Activated CD8-positive, alpha-beta T cell treated with anti-CD3 and anti-CD28 coated beads for 36 hours (primary cell): ENCODE measurements at regions of chr2 and their contacts with region 1.

Region 1: DNA sequence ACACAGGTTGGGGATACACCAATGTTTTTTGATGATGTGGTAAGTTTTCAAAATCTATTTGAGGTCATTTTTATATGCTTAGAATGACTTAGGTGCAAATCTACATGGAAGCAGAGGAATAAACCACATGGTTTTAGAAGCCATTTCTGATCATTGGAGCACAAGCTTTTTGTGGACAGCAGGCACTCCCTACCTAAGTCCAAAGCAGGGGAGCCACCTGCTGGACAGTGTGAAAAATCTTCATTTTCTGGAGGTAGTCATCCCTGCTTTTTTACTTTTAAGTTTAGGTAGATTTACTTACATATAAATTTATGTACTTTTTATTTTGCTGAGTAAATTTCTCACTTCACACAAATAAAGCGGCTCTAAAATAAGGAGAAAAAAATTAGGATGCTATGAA is 323.2 kb downstream of the PLCL1 start:
- DNase-seq: peak; percentile 42
- ATAC-seq: peak; percentile 60
- H3K4me3 Mint-ChIP-seq: no peak overlapping the region
- H3K27ac Mint-ChIP-seq: no peak overlapping the region
- H3K4me1 Mint-ChIP-seq: no peaks in the 10 kb centered on the region
- H3K27me3 Mint-ChIP-seq: no peaks in the 10 kb centered on the region
- CTCF ChIP-seq: peak; percentile 68

Region 2: GRCh38 chr2:197799068-197799467 is 328.6 kb before region 1 on chr2:
- CTCF ChIA-PET with region 1: interaction called, 27 read pairs
- POLR2A ChIA-PET with region 1: no interaction called
- intact Hi-C with region 1: loop called (anchors 1 kb)
- DNase-seq: no peak
- ATAC-seq: no peak
- H3K4me3 Mint-ChIP-seq: no peak overlapping the region
- H3K27ac Mint-ChIP-seq: no peak overlapping the region
- H3K4me1 Mint-ChIP-seq: peaks cover 13% of the 10 kb centered on the region
- H3K27me3 Mint-ChIP-seq: peaks cover 19% of the 10 kb centered on the region
- CTCF ChIP-seq: no peak

Region 3: GRCh38 chr2:197804049-197804757 is 323.4 kb before region 1 on chr2 and contains the start of gene PLCL1:
- CTCF ChIA-PET with region 1: interaction called, 27 read pairs
- POLR2A ChIA-PET with region 1: no interaction called
- intact Hi-C with region 1: loop called (anchors 1 kb)
- DNase-seq: peak; percentile 93
- ATAC-seq: peak; percentile 99
- H3K4me3 Mint-ChIP-seq: peak within 1 kb of the TSS; percentile 85
- H3K27ac Mint-ChIP-seq: peak within 1 kb of the TSS; percentile 71
- H3K4me1 Mint-ChIP-seq: peaks cover 40% of the 10 kb centered on the region
- H3K27me3 Mint-ChIP-seq: peaks cover 8% of the 10 kb centered on the region
- CTCF ChIP-seq: no peak
- total RNA-seq, gene PLCL1: 0.68 to 0.69 TPM

Region 4: DNA sequence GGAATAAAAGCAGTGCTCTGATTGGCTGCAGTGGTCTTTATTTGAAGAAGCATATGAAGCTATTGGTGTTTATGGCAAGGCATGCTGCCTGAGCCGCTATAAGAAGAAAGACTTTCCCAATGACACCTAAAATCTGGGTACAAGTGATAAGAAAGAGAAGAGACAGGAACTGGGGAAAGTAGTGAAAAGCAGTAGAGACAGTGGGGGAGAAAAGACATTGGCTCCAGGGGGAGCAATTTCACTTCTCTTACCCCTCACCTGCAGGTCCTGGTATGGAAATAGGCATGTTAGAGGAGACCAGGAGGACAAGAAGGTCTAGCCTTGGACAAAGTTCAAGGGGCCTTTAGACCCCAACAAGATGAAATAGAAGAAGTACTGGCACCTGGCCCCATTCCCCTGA is 276.2 kb before region 1 on chr2:
- CTCF ChIA-PET with region 1: interaction called, 12 read pairs
- POLR2A ChIA-PET with region 1: no interaction called
- intact Hi-C with region 1: loop called (anchors 2 kb)
- DNase-seq: peak; percentile 15
- ATAC-seq: no peak
- H3K4me3 Mint-ChIP-seq: no peak overlapping the region
- H3K27ac Mint-ChIP-seq: no peak overlapping the region
- H3K4me1 Mint-ChIP-seq: peaks cover 48% of the 10 kb centered on the region
- H3K27me3 Mint-ChIP-seq: no peaks in the 10 kb centered on the region
- CTCF ChIP-seq: peak; percentile 22

Region 5: DNA sequence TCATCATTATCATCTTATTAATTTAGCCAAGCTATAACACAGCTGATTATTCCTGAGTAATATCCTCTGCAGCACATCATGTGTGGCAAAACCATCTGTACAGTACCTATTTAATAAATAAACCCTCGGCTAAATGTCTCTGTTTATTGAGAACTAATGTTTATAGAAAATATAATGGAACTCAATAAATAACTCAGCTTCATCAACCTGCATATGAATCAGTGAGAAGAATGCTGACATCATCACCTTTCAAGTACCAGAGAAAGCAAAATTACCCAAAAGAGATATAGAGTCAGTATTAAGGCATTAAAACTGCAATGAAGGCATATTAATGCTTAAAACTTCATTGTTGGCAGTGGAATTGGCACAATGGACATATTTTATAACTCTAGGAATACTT is 235.1 kb after region 1 on chr2:
- CTCF ChIA-PET with region 1: no interaction called
- POLR2A ChIA-PET with region 1: no interaction called
- intact Hi-C with region 1: no loop called
- DNase-seq: no peak
- ATAC-seq: no peak
- H3K4me3 Mint-ChIP-seq: no peak overlapping the region
- H3K27ac Mint-ChIP-seq: no peak overlapping the region
- H3K4me1 Mint-ChIP-seq: no peaks in the 10 kb centered on the region
- H3K27me3 Mint-ChIP-seq: peaks cover 21% of the 10 kb centered on the region
- CTCF ChIP-seq: no peak